ENCODE measurements at regions of chr1 and their contacts with region 1.

Region 1: GRCh38 chr1:40338745-40339424 is 21.8 kb upstream of the COL9A2 start:
- DNase-seq: peak; percentile 96
- ATAC-seq: peak; percentile 92
- H3K4me3 Mint-ChIP-seq: no peak overlapping the region
- H3K27ac Mint-ChIP-seq: peak overlapping the region; percentile 9
- H3K4me1 Mint-ChIP-seq: peaks cover 41% of the 10 kb centered on the region
- H3K27me3 Mint-ChIP-seq: no peaks in the 10 kb centered on the region
- CTCF ChIP-seq: peak; percentile 96

Region 2: DNA sequence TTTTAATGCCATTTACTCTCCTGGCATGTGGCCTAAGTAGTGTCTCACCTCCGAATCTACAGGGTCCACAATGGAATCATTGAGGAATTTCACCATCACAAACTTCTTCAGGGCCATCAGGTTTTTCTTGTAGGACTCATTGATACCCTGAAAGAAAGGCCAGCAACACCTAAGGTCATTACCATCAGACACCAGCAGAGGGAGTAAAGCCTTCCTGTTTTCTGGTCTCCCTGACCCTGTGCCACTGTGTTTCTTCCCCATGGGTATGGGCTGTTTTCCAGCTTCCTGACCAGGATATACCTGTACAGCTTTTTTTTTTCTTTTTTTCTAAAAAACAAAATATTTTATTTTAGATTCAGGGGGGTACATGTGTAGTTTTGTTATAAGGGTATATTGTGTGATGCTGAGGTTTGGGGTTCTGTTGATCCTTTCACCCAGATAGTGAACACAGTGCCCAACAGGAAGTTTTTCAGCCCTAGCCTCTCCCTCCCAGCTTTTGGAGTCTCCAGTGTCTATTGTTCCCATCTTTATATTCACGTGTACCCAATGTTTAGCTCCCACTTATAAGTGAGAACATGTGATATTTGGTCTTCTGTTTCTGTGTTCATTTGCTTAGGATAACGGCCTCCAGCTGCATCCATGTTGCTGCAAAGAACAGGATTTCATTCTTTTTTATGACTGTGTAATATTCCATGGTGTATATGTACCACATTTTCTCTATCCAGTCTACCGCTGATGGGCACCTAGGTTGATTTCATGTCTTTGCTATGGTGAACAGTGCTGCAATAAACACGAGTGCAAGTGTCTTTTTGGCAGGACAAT is 260.2 kb before region 1 on chr1:
- CTCF ChIA-PET with region 1: interaction called, 49 read pairs
- POLR2A ChIA-PET with region 1: interaction called, 3 read pairs
- intact Hi-C with region 1: no loop called
- DNase-seq: peak; percentile 62
- ATAC-seq: peak; percentile 94
- H3K4me3 Mint-ChIP-seq: no peak overlapping the region
- H3K27ac Mint-ChIP-seq: peak overlapping the region; percentile 20
- H3K4me1 Mint-ChIP-seq: peaks cover 5% of the 10 kb centered on the region
- H3K27me3 Mint-ChIP-seq: no peaks in the 10 kb centered on the region
- CTCF ChIP-seq: peak; percentile 90

Region 3: DNA sequence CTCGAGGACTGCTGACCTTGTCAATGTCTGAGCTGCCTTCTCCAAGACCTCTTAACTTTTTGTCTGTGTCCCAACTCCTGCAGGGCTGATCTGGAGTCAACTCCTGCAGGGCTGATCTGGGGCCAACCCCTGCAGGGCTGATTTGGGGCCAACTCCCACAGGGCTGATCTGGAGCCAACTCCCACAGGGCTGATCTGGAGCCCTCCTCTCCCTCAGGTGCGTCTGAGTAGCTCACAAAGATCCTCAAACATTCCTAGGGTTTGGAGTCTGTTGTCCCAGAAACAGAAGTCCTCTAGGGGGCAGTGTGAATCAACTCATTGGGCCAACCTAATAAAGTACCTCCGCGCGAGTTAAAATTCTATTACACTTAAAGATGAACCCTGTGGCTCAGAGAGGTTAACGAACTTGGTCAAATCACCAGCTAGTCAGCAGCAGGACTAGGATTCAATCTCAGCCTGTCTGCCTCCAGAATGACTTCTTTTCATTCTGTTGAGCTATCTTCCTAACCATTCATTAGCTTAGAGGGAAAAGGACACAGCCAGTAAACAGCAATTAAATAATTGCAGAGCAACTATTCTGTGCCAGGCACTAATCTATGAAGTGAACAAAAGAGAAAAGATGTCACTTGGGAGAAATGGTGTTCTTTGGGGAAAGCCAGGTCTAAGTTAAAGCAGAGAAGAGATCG is 194.9 kb before region 1 on chr1:
- CTCF ChIA-PET with region 1: interaction called, 331 read pairs
- POLR2A ChIA-PET with region 1: interaction called, 3 read pairs
- intact Hi-C with region 1: loop called (anchors 2 kb)
- DNase-seq: peak; percentile 71
- ATAC-seq: peak; percentile 84
- H3K4me3 Mint-ChIP-seq: no peak overlapping the region
- H3K27ac Mint-ChIP-seq: no peak overlapping the region
- H3K4me1 Mint-ChIP-seq: peaks cover 3% of the 10 kb centered on the region
- H3K27me3 Mint-ChIP-seq: peaks cover 23% of the 10 kb centered on the region
- CTCF ChIP-seq: peak; percentile 90

Region 4: GRCh38 chr1:40185951-40186864 is 152.7 kb before region 1 on chr1:
- CTCF ChIA-PET with region 1: interaction called, 15 read pairs
- POLR2A ChIA-PET with region 1: interaction called, 4 read pairs
- intact Hi-C with region 1: no loop called
- DNase-seq: peak; percentile 86
- ATAC-seq: peak; percentile 95
- H3K4me3 Mint-ChIP-seq: no peak overlapping the region
- H3K27ac Mint-ChIP-seq: peak overlapping the region; percentile 80
- H3K4me1 Mint-ChIP-seq: peaks cover 48% of the 10 kb centered on the region
- H3K27me3 Mint-ChIP-seq: no peaks in the 10 kb centered on the region
- CTCF ChIP-seq: no peak

Region 5: DNA sequence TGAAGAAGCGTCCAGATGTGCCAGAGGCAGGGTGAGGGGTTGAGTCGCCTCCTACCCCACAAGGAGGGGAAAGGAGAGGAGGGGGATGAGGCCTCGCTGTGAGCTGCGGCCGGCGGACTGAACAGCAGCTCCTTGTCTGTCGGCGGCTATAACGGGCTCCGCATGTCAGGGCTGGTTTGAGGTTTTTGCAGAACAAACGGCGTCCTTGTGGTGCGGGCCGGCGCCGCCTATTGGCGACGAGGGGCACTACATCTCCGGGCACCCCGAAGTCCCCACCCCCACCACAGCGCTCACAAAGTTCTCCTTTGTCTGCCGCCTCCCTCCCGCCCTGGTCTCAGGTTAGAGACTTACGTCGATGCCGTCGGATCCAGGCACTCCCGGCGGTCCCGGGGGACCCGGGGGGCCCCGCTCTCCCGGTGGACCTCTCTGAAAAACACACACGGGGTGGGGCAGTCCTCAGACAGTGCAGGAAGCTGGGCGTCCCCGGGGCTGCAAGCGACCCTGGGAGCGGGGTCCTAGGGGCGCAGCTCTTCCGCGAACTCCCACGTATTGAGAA is 23.6 kb before region 1 on chr1:
- CTCF ChIA-PET with region 1: interaction called, 108 read pairs
- POLR2A ChIA-PET with region 1: interaction called, 4 read pairs
- intact Hi-C with region 1: no loop called
- DNase-seq: peak; percentile 92
- ATAC-seq: peak; percentile 82
- H3K4me3 Mint-ChIP-seq: peak overlapping the region; percentile 79
- H3K27ac Mint-ChIP-seq: no peak overlapping the region
- H3K4me1 Mint-ChIP-seq: peaks cover 31% of the 10 kb centered on the region
- H3K27me3 Mint-ChIP-seq: peaks cover 9% of the 10 kb centered on the region
- CTCF ChIP-seq: peak; percentile 93

Region 6: GRCh38 chr1:40373338-40374283 is 34.7 kb after region 1 on chr1 and contains the start of gene SMAP2:
- CTCF ChIA-PET with region 1: interaction called, 18 read pairs
- POLR2A ChIA-PET with region 1: interaction called, 14 read pairs
- intact Hi-C with region 1: no loop called
- DNase-seq: peak; percentile 96
- ATAC-seq: peak; percentile 89
- H3K4me3 Mint-ChIP-seq: peak within 1 kb of the TSS; percentile 97
- H3K27ac Mint-ChIP-seq: peak within 1 kb of the TSS; percentile 98
- H3K4me1 Mint-ChIP-seq: peaks cover 41% of the 10 kb centered on the region
- H3K27me3 Mint-ChIP-seq: no peaks in the 10 kb centered on the region
- CTCF ChIP-seq: no peak
- total RNA-seq, gene SMAP2: 204 to 209 TPM

Region 7: DNA sequence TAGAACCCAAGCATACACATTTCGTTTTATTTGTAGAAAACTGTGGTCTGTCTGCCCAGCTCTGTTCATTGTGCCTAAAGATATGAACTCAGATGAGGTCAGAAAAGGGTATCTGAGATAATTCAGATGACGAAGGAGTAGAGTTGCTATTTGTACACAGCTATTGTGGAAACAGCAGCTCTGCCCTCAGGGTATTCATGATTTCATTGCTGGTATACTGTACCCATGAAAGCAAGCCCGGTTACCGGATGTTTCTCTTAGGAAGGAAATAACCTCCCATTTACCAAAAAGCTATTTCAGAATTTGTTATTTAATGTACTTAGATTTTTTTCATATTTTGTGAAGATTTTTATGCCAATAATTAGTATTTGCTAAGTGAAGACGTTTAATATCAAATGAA is 72.4 kb after region 1 on chr1:
- CTCF ChIA-PET with region 1: interaction called, 33 read pairs
- POLR2A ChIA-PET with region 1: no interaction called
- intact Hi-C with region 1: no loop called
- DNase-seq: no peak
- ATAC-seq: no peak
- H3K4me3 Mint-ChIP-seq: no peak overlapping the region
- H3K27ac Mint-ChIP-seq: no peak overlapping the region
- H3K4me1 Mint-ChIP-seq: peaks cover 60% of the 10 kb centered on the region
- H3K27me3 Mint-ChIP-seq: no peaks in the 10 kb centered on the region
- CTCF ChIP-seq: no peak

Region 8: DNA sequence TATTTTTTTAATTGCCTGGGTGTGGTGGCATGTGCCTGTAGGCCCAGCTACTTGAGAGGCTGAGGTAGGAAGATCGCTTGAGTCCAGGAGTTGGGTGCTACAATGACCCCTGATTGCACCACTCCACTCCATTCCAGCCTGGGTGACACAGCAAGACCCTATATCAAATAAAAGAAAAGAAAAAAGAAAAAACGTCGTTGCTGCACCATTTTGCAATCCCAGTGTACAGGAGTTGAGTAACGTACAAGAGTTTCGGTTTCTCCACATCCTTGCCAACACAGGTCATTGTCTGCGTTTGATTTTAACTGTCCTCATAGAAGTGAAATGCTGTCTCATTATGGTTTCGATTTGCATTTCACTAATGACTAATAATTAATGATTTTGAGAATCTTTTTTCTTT is 200.5 kb after region 1 on chr1:
- CTCF ChIA-PET with region 1: no interaction called
- POLR2A ChIA-PET with region 1: no interaction called
- intact Hi-C with region 1: no loop called
- DNase-seq: no peak
- ATAC-seq: no peak
- H3K4me3 Mint-ChIP-seq: no peak overlapping the region
- H3K27ac Mint-ChIP-seq: no peak overlapping the region
- H3K4me1 Mint-ChIP-seq: no peaks in the 10 kb centered on the region
- H3K27me3 Mint-ChIP-seq: no peaks in the 10 kb centered on the region
- CTCF ChIP-seq: no peak

Region 9: GRCh38 chr1:40583980-40584379 is 245.1 kb after region 1 on chr1:
- CTCF ChIA-PET with region 1: no interaction called
- POLR2A ChIA-PET with region 1: no interaction called
- intact Hi-C with region 1: no loop called
- DNase-seq: peak; percentile 40
- ATAC-seq: peak; percentile 71
- H3K4me3 Mint-ChIP-seq: no peak overlapping the region
- H3K27ac Mint-ChIP-seq: peak overlapping the region; percentile 13
- H3K4me1 Mint-ChIP-seq: peaks cover 15% of the 10 kb centered on the region
- H3K27me3 Mint-ChIP-seq: peaks cover 4% of the 10 kb centered on the region
- CTCF ChIP-seq: no peak